A673 (cell line): ENCODE measurements at regions of chr11 and their contacts with region 1.

Region 1: DNA sequence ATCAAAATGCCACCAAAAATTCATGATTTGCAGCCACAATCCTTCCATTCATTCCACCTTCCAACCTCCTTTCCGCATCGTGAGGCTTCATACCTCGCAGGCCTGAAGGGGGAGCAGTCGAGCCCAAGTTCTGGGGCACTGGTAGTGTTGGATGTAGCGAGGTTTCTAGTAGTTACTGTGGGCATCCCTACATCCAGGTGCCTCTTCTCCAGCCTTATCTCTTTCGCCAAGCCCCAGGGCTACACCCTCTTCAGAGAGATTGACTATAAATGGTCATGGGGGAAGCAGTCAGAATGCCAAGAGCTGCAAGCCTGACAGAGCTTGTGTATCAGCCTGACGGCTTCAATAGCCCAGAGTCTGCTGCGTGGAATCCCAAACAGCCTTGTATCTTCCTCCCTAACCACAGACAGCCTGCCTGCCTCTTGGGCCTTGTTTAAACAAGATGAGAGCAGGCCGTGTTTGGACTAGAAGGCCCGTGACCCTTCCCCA is 28.9 kb downstream of the CLMP start:
- DNase-seq: peak; percentile 84
- H3K4me3 ChIP-seq: no peak overlapping the region
- H3K27ac ChIP-seq: peak overlapping the region; percentile 55
- H3K4me1 ChIP-seq: peaks cover 64% of the 10 kb centered on the region
- H3K27me3 ChIP-seq: no peaks in the 10 kb centered on the region
- CTCF ChIP-seq: peak; percentile 96

Region 2: GRCh38 chr11:123211149-123211852 is 45.2 kb after region 1 on chr11:
- CTCF ChIA-PET with region 1: no interaction called
- POLR2A ChIA-PET with region 1: interaction called, 10 read pairs
- intact Hi-C with region 1: no loop called
- DNase-seq: no peak
- H3K4me3 ChIP-seq: no peak overlapping the region
- H3K27ac ChIP-seq: no peak overlapping the region
- H3K4me1 ChIP-seq: peaks cover 34% of the 10 kb centered on the region
- H3K27me3 ChIP-seq: no peaks in the 10 kb centered on the region
- CTCF ChIP-seq: no peak